Sigmoid colon (tissue), 7 donors: ENCODE measurements at regions of chr19 and their contacts with region 1.

Region 1: DNA sequence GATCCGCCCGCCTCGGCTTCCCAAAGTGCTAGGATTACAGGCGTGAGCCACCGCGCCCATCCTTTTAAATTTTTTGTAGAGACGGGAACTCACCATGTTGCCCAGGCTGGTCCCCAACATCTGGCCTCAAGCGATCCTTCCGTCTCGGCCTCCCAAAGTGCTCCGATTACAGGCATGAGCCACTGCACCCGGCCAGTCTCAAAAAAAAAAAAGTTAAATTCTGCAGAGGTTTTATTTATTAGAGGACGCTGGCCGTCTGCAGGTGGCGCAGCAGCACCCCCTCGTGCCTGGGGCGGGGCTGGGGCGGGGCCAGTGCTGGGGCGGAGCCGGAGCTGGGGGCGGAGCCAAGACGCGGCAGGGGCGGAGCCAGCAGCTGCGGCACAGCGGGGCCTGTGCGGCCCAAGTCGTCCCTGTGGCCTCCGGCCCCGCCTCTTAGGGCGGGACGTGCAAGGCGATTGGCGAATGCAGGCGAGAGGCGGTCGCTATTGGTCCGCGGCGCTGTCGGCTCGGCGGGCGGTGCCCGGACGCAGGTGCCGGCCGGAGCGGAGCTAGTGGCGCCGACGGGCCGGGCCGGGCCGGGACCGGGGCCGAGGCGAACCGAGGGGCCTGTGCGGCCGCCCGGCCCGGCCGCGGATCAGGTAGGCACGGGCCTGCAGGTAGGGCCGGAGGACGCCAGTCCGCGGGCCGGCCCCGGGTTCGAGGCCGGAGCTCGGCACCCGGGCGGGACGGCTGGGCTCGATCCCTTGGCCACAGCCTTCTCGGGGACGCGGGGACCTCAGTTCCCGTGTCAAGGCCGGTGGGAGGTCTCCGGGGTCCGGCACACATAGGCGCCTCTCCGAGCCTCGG is at the start of gene MARCHF2:
- DNase-seq: peak; percentile 99
- H3K4me3 ChIP-seq: peak within 1 kb of the TSS; percentile 81 to 96 (median 93)
- H3K27ac ChIP-seq: peak within 1 kb of the TSS; percentile 83 to 92 (median 88)
- H3K4me1 ChIP-seq: peaks cover 0 to 51% (median 46%) of the 10 kb centered on the region in 4 donors
- H3K27me3 ChIP-seq: no peaks in the 10 kb centered on the region
- CTCF ChIP-seq: peak in 3 of 4 experiments; percentile 27 to 64 (median 32)
- EP300 ChIP-seq: no peak
- POLR2A ChIP-seq: no peak
- total RNA-seq, gene MARCHF2: 283 to 383 (median 303) TPM

Region 2: GRCh38 chr19:8355631-8356402 is 57.2 kb before region 1 on chr19:
- intact Hi-C with region 1: loop called (anchors 5 kb)
- DNase-seq: no peak
- H3K4me3 ChIP-seq: no peak overlapping the region
- H3K27ac ChIP-seq: peak overlapping the region in 2 of 4 donors; percentile 13 to 28
- H3K4me1 ChIP-seq: peaks cover 0 to 19% (median 7%) of the 10 kb centered on the region in 4 donors
- H3K27me3 ChIP-seq: peaks cover 0 to 5% (median 0%) of the 10 kb centered on the region in 3 donors
- CTCF ChIP-seq: no peak
- EP300 ChIP-seq: peak in 1 of 4 donors; percentile 8
- POLR2A ChIP-seq: no peak

Region 3: DNA sequence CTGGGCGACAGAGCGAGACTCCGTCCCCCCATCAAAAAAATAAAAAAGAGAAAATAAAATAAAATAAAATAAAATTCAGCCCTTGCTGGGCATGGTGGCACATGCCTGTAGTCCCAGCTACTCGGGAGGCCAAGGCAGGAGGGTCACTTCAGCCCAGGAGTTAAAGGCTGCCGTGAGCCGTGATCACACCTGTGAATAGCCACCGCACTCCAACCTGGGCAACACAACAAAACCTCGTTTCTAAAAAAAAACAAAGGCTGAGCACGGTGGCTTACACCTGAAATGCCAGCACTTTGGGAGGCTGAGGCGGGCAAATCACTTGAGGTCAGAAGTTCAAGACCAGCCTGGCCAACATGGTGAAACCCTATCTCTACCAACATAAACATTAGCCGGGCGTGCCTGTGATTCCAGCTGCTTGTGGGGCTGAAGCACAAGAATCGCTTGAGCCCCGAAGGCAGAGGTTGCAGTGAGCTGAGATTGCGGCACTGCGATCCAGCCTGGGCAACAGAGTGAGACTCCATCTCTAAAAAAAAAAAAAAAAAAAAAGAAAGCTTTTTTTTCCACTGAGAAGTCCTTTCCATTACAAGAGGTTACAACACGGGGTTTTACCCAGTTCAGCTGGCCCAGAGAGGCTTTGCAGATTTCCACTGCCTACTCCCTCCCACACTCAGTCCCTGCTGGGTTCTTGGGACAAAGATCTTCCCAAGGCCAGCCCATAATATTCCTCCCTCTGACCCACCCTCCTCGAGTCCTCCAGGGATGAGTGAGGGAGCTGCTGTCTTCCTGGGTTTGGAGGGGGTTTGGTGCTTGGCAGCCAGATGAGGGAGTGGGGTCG is 42.6 kb before region 1 on chr19:
- intact Hi-C with region 1: loop called (anchors 2 kb)
- DNase-seq: no peak
- H3K4me3 ChIP-seq: no peak overlapping the region
- H3K27ac ChIP-seq: peak overlapping the region in 1 of 4 donors; percentile 42
- H3K4me1 ChIP-seq: peaks cover 0 to 37% (median 29%) of the 10 kb centered on the region in 4 donors
- H3K27me3 ChIP-seq: peaks cover 0 to 2% (median 0%) of the 10 kb centered on the region in 3 donors
- CTCF ChIP-seq: no peak
- EP300 ChIP-seq: no peak
- POLR2A ChIP-seq: no peak

Region 4: DNA sequence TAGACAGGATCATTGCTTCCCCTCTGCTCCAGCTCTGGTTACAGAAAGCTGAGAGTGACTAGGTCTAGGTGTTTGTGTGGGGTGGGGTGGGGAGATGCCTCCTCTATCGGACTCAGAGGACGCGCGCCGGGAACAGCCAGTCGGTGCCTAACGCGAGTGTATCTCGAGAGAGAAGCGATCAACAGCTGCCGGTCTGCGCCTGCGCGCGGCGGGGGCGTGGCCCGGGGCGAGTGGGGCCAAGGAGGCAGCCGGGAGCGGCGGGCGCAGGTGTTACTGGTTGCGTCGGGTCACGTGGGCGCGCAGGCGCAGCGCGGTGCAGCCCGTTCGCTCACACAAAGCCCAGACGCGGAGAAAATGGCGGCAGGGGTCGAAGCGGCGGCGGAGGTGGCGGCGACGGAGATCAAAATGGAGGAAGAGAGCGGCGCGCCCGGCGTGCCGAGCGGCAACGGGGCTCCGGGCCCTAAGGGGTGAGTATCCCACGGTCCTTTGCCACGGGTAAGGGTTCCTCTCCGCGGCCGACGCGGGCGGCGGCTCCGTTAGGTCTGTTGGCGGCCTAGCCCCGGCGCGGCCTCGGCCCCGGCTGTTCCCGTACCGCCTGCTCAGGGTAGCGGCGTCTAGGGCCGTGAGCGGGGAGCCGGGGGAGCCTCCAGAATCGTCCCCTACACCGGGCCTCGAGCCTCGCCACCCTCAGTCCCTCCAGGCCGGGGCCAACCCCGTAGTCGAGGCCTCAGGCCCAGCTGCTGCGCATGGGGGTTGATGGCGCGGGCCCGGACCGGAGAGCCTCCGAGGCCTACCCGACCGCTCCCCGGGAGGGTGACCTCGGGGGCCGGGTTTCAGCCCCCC is 31.9 kb after region 1 on chr19 and contains the start of gene HNRNPM:
- intact Hi-C with region 1: loop called (anchors 2 kb)
- DNase-seq: peak; percentile 100
- H3K4me3 ChIP-seq: peak within 1 kb of the TSS; percentile 86 to 99 (median 91)
- H3K27ac ChIP-seq: peak within 1 kb of the TSS; percentile 96 to 98 (median 98)
- H3K4me1 ChIP-seq: peaks cover 0 to 45% (median 41%) of the 10 kb centered on the region in 4 donors
- H3K27me3 ChIP-seq: no peaks in the 10 kb centered on the region
- CTCF ChIP-seq: no peak
- EP300 ChIP-seq: no peak
- POLR2A ChIP-seq: peak; percentile 85 to 91
- total RNA-seq, gene HNRNPM: 62.8 to 100 (median 76.1) TPM

Region 5: DNA sequence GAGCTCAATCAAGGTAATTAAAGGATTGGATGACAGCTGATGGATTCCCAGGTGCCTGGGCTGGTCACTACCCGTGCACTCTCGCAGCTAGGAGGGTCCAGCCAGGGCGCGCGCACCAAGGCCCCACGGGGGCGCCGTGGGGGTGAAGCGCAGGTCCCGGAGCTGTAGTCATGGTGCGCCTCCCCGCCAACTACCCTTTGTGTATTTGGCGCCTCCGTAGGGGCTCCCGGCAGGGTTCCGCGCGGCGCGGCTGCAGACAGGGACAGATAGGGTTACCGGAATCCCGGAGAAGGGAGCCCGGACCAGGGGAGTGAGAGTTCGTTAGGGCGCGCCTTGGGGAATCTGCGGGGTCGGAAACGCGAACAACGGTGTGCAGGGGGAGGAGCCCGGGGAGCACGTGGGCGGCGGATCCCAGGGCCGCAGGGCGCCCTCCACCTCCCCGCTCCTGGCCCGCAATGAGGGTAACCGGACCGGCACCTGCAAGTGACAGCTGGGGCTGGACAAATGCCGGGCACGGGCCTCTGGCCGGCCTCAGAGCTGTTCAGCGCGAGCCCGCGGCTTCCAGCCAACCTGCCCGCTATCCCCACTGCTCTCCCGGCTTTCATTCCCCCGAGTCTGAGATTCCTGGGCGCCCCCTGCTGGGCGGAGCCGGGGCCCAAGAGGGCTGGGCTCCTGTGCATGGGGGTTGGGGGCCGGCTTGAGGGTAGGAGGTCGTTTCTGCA is 92.8 kb after region 1 on chr19:
- intact Hi-C with region 1: loop called (anchors 2 kb)
- DNase-seq: peak; percentile 85
- H3K4me3 ChIP-seq: peak overlapping the region; percentile 23 to 59 (median 54)
- H3K27ac ChIP-seq: peak overlapping the region in 3 of 4 donors; percentile 8 to 43 (median 8)
- H3K4me1 ChIP-seq: peaks cover 0 to 20% (median 11%) of the 10 kb centered on the region in 4 donors
- H3K27me3 ChIP-seq: no peaks in the 10 kb centered on the region
- CTCF ChIP-seq: peak; percentile 82 to 86 (median 86)
- EP300 ChIP-seq: no peak
- POLR2A ChIP-seq: no peak